Kidney (tissue), 22 donors: ENCODE measurements at regions of chr19 and their contacts with region 1.

Region 1: DNA sequence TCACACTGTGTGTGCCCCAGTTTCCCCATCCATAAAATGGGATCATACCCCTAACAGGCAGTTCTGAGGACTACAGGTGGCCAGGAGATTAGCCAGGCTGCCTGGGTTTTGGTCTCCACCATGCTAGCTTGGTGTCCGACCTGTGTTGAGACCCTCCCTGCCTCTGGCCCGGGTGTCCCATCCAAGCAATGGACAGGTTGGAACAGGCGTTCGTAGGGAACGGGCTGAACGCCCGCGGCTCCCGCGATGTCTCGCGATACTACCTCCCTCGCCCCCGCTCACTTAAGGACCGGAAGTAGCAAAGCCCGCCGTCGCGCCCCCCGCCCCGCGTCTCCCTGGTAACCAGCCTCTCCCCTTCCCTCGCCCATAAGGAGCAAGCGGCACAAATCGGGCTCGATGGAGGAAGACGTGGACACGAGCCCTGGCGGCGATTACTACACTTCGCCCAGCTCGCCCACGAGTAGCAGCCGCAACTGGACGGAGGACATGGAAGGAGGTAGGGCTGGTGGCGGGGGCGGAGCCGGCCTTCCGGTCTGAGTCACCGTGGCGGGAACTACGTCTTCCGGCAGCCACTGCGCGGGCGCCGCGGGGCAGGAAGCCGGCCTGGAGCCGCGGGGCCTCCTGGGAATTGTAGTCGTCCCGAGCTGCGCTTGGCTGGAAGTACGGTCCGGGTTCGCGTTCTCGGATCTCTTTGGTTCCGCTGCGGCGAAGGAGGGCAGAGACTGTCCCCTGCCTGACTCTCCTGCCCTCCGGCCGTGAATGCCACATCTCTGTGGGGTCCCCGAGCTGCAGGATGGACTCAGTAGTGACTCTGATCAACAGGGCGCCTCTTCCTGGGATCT is 45.4 kb downstream of the SMIM24 start:
- DNase-seq: peak; percentile 97 to 99 (median 98)
- H3K4me3 ChIP-seq: peak overlapping the region; percentile 64 to 89 (median 69)
- H3K27ac ChIP-seq: peak overlapping the region; percentile 90 to 97
- H3K4me1 ChIP-seq: peaks cover 0 to 10% (median 7%) of the 10 kb centered on the region in 3 donors
- H3K27me3 ChIP-seq: no peaks in the 10 kb centered on the region
- CTCF ChIP-seq: no peak

Region 2: GRCh38 chr19:3343619-3344502 is 91.1 kb before region 1 on chr19:
- intact Hi-C with region 1: loop called (anchors 10 kb)
- DNase-seq: peak in 2 of 5 donors; percentile 9 to 95
- H3K4me3 ChIP-seq: peak overlapping the region in 1 of 3 donors; percentile 48
- H3K27ac ChIP-seq: peak overlapping the region; percentile 32 to 82
- H3K4me1 ChIP-seq: peaks cover 0 to 6% (median 0%) of the 10 kb centered on the region in 3 donors
- H3K27me3 ChIP-seq: no peaks in the 10 kb centered on the region
- CTCF ChIP-seq: no peak

Region 3: DNA sequence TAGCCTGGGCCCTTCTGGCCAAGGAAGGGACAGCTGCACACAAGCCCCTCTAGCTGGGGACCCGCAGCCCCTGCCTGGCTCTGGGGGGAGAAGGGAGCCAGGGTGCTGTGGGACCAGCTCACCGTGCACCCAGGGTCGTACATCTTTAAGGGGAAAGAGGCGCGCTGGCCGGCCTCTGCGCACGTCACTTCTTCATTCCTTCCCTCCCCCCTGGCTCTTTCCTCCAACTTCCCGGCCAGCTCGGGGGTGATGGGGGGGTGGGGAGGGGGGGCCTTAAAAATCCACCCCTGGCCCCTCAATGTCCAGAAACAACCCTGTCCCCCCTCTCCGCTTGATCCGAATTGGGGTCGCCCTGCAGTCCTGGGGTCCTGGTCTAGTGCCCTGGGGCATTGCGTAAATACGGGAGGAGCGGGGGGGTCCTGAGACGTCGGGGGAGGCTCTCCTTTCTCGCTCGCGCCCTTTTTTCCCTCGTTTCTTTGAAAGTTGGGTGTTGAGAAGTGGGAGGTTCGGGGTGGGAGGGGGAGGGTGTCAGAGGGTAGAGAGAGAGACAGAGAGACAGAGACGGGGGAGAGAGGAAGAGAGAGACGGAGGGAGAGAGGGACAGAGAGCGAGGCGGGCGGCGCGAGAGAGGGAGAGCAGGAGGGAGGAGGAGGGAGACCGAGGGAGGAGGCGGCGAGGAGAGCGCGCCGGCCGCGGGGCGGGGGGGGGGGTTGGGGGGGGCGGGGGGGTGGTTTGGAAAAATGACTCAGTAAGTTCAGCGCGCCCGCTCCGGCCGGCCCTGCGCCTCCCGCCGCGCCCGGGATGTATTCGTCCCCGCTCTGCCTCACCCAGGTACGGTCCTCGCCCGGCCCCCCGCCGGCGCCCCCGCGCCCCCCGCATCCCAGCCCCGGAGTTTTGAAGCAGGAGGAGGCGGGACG is 68.8 kb before region 1 on chr19 and contains the start of gene NFIC:
- intact Hi-C with region 1: no loop called
- DNase-seq: peak; percentile 46 to 95 (median 74)
- H3K4me3 ChIP-seq: peak within 1 kb of the TSS; percentile 17 to 72 (median 60)
- H3K27ac ChIP-seq: peak within 1 kb of the TSS; percentile 92 to 94
- H3K4me1 ChIP-seq: peaks cover 4 to 43% (median 38%) of the 10 kb centered on the region in 3 donors
- H3K27me3 ChIP-seq: peaks cover 3% of the 10 kb centered on the region
- CTCF ChIP-seq: no peak
- total RNA-seq, gene NFIC: 173 TPM

Region 4: GRCh38 chr19:3505598-3506383 is 70.9 kb after region 1 on chr19 and contains the start of gene FZR1:
- intact Hi-C with region 1: no loop called
- DNase-seq: peak; percentile 99 to 100 (median 100)
- H3K4me3 ChIP-seq: peak within 1 kb of the TSS; percentile 77 to 97 (median 93)
- H3K27ac ChIP-seq: peak within 1 kb of the TSS; percentile 80 to 84
- H3K4me1 ChIP-seq: peaks cover 0 to 6% (median 0%) of the 10 kb centered on the region in 3 donors
- H3K27me3 ChIP-seq: no peaks in the 10 kb centered on the region
- CTCF ChIP-seq: no peak
- total RNA-seq, gene FZR1: 48.0 TPM

Region 5: GRCh38 chr19:3606690-3607289 is 171.9 kb after region 1 on chr19 and contains the start of gene TBXA2R:
- intact Hi-C with region 1: no loop called
- DNase-seq: peak in 4 of 5 donors; percentile 45 to 83 (median 78)
- H3K4me3 ChIP-seq: peak within 1 kb of the TSS; percentile 52 to 53 (median 53)
- H3K27ac ChIP-seq: peak within 1 kb of the TSS; percentile 85 to 87
- H3K4me1 ChIP-seq: peaks cover 4 to 33% (median 12%) of the 10 kb centered on the region in 3 donors
- H3K27me3 ChIP-seq: peaks cover 9% of the 10 kb centered on the region
- CTCF ChIP-seq: no peak
- total RNA-seq, gene TBXA2R: 6.7 TPM